ENCODE measurements at regions of chr9 and their contacts with region 1.

Region 1: DNA sequence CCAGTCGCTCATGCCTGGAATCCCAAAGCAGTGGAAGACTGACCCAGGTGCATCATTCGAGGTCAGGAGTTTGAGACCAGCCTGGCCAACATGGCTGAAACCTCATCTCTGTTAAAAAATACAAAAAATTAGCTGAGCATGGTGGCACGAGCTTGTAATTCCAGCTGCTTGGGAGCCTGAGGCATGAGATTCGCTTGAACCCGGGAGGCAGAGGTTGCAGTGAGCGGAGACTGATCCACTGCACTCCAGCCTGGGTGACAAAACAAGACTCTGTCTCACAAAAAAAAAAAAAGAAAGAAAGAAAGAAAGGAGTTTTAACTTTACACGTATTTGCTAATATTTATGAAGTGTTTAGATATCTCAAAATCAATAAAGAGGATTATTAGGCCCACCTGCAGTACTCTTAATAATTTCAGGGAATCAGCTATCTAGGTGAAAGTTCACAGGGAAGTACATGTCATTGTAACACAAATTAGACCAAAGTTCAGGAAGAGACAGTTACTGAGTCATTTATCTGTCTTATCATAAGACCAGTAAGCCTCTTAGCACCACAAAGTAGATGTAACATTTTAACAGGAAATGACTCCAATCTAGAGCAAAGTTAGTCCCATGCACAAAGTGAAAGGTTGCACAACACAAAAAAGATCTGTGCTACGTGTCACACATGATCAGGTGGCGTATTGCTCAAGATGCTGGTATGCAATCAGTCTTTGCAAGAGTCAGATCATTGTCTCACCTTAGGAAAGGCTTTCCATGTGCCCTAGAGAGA is 34.1 kb upstream of the PLIN2 start:
- H3K4me3 Mint-ChIP-seq: no peak overlapping the region
- H3K27ac Mint-ChIP-seq: peak overlapping the region; percentile 65
- H3K4me1 Mint-ChIP-seq: peaks cover 48% of the 10 kb centered on the region
- H3K27me3 Mint-ChIP-seq: no peaks in the 10 kb centered on the region

Region 2: DNA sequence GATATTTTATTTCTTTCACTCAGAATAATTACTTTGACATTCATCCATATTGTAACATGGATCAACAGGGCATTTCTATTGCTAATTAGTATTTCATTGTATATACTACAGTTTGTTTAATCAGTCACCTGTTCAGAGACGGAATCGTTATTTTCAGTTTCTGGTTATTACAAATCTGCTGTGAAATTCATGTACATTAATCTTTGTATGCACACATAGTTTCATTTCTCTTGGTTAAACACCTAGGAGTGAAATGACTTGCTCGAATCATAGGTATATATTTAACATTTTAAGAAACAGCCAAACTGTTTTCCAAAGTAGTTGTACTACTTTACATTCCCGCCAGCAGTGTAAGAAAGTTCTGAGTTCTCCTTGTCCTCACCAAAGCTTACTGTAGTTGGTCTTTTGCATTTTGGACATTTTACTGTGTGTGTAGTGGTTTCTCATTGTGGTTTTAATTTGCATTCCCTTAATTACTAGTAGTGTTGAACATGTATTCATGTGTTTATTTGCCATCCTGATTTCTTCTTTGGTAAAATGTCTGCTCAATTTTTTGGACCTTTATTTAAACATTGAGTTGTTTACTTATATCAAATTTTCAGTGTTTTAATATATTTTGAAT is 326.6 kb before region 1 on chr9:
- intact Hi-C with region 1: no loop called
- H3K4me3 Mint-ChIP-seq: no peak overlapping the region
- H3K27ac Mint-ChIP-seq: no peak overlapping the region
- H3K4me1 Mint-ChIP-seq: no peaks in the 10 kb centered on the region
- H3K27me3 Mint-ChIP-seq: no peaks in the 10 kb centered on the region

Region 3: DNA sequence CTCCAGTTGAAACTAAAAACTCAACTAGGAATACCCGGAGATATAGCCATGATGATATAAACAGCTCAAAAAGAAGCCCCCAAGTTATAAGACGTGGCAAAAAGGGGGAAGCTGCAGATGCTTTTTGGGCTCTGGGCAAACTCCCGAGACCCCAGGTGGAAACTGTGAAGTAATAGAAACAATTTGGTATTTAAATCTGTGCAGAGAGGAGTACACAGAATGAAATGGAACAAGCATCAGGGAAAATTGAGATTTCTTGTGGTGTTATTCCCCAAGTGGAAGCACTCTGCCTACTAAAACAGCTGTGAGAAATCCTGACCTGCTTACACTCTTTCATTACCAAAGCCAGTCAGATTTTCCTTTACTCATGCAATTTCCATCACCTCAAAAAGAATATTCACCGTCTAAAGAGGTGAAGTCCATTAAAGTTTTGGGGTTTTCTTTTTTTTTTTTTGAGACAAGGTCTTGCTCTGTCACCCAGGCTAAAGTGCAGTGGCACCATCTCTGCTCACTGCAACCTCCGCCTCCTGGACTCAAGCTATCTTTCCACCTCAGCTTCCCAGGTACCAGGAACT is 152.0 kb before region 1 on chr9:
- intact Hi-C with region 1: no loop called
- H3K4me3 Mint-ChIP-seq: no peak overlapping the region
- H3K27ac Mint-ChIP-seq: no peak overlapping the region
- H3K4me1 Mint-ChIP-seq: no peaks in the 10 kb centered on the region
- H3K27me3 Mint-ChIP-seq: peaks cover 3% of the 10 kb centered on the region

Region 4: GRCh38 chr9:19127881-19128500 is 33.5 kb before region 1 on chr9:
- intact Hi-C with region 1: loop called (anchors 5 kb)
- H3K4me3 Mint-ChIP-seq: peak overlapping the region; percentile 84
- H3K27ac Mint-ChIP-seq: peak overlapping the region; percentile 96
- H3K4me1 Mint-ChIP-seq: peaks cover 52% of the 10 kb centered on the region
- H3K27me3 Mint-ChIP-seq: no peaks in the 10 kb centered on the region

Region 5: DNA sequence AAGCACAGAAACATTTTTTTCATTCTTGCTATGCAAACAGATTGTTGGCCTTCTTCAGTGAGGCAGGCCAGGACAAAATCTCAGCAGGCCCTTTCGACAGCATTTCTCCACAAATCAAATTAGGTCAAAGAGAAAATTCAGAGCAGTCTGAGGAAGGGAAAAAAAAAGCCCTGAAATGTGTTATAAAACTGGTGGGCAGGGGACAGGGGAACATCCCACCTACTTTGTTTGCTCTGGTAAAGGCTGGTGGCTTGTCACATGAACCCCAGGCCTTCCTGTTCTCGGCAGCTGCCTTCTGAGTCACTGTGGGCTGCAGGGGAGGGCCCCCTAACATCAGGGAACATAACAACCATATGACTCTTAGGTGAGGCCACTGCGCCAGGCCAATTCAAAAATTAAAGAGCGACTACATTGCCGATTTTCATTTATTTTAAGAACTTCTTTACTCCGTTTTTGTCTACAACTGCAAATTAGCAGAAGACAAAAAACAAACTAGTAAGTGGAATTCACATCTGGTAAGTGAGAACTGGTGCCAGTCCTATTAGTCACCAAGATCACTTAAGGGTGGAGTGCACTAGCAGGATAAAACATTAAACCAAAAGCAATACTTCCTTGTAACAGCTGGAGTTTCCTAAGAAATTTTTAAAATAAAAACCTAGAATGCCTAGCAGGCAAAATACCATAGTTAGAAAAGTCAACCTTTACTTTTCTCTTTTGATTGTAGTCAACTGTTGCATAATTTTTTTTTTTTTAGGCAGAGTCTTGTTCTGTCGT is 22.9 kb after region 1 on chr9:
- intact Hi-C with region 1: loop called (anchors 1 kb)
- H3K4me3 Mint-ChIP-seq: peak overlapping the region; percentile 11
- H3K27ac Mint-ChIP-seq: peak overlapping the region; percentile 94
- H3K4me1 Mint-ChIP-seq: peaks cover 34% of the 10 kb centered on the region
- H3K27me3 Mint-ChIP-seq: no peaks in the 10 kb centered on the region

Region 6: DNA sequence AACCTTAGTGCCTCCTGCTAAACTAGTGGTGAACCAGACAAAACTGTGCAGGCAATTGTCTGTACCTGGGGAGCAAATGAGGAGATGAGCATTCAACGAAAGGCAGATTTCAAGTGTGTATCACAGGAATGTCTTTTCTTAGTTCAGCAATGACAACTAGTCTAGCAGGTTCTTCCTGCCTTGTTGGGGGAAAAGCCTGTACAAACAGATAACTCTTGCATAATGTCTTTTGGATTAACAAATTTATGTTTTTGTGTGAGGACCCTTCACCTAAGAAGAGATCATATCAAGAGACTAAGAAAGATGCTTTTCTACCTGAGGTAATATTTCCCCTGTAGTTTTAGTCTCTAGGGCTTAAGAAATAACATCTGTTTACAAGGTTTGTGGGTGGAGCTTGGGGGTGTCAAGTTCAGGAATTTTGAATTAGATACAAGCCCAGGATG is 47.3 kb after region 1 on chr9:
- intact Hi-C with region 1: no loop called
- H3K4me3 Mint-ChIP-seq: no peak overlapping the region
- H3K27ac Mint-ChIP-seq: no peak overlapping the region
- H3K4me1 Mint-ChIP-seq: no peaks in the 10 kb centered on the region
- H3K27me3 Mint-ChIP-seq: no peaks in the 10 kb centered on the region

Measured in dendritic cell treated with granulocyte-macrophage colony-stimulating factor and Interleukin-4, amounts not matched to agents 40 ng/mL and 50 ng/mL, for 4 days (primary cell).